Activated CD8-positive, alpha-beta T cell treated with anti-CD3 and anti-CD28 coated beads for 36 hours (primary cell): ENCODE measurements at regions of chr1 and their contacts with region 1.

Region 1: GRCh38 chr1:50873458-50874187 is 86.4 kb downstream of the FAF1 start:
- DNase-seq: peak; percentile 87
- ATAC-seq: peak; percentile 82
- H3K4me3 Mint-ChIP-seq: no peak overlapping the region
- H3K27ac Mint-ChIP-seq: no peak overlapping the region
- H3K4me1 Mint-ChIP-seq: peaks cover 12% of the 10 kb centered on the region
- H3K27me3 Mint-ChIP-seq: no peaks in the 10 kb centered on the region
- CTCF ChIP-seq: peak; percentile 77

Region 2: GRCh38 chr1:50861772-50862171 is 11.9 kb before region 1 on chr1:
- CTCF ChIA-PET with region 1: interaction called, 11 read pairs
- POLR2A ChIA-PET with region 1: no interaction called
- intact Hi-C with region 1: no loop called
- DNase-seq: no peak
- ATAC-seq: no peak
- H3K4me3 Mint-ChIP-seq: no peak overlapping the region
- H3K27ac Mint-ChIP-seq: no peak overlapping the region
- H3K4me1 Mint-ChIP-seq: peaks cover 18% of the 10 kb centered on the region
- H3K27me3 Mint-ChIP-seq: no peaks in the 10 kb centered on the region
- CTCF ChIP-seq: no peak

Region 3: GRCh38 chr1:50959913-50960844 is 86.6 kb after region 1 on chr1 and contains the start of gene FAF1:
- CTCF ChIA-PET with region 1: interaction called, 10 read pairs
- POLR2A ChIA-PET with region 1: no interaction called
- intact Hi-C with region 1: no loop called
- DNase-seq: peak; percentile 96
- ATAC-seq: peak; percentile 89
- H3K4me3 Mint-ChIP-seq: peak within 1 kb of the TSS; percentile 88
- H3K27ac Mint-ChIP-seq: peak within 1 kb of the TSS; percentile 91
- H3K4me1 Mint-ChIP-seq: peaks cover 21% of the 10 kb centered on the region
- H3K27me3 Mint-ChIP-seq: no peaks in the 10 kb centered on the region
- CTCF ChIP-seq: peak; percentile 23
- total RNA-seq, gene FAF1: 82.2 to 87.0 TPM

Region 4: DNA sequence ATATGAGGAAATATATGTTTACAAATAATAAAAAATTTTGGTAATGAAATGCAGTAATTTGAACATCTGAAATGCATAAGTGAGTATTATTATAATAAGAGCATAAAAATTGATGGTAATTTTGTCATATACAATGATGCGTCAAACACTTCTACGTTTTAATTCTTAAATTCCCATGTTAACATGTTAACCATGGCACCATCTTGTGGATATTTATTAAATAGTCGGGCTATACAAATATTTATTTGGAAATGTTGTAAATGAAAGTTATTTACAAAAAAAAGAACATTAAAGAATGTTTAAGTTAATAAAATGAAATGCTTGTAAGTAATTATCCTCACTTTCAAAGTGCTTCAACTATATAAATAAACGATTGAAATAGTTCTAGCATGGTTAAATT is 171.2 kb after region 1 on chr1:
- CTCF ChIA-PET with region 1: no interaction called
- POLR2A ChIA-PET with region 1: no interaction called
- intact Hi-C with region 1: loop called (anchors 10 kb)
- DNase-seq: no peak
- ATAC-seq: no peak
- H3K4me3 Mint-ChIP-seq: no peak overlapping the region
- H3K27ac Mint-ChIP-seq: no peak overlapping the region
- H3K4me1 Mint-ChIP-seq: no peaks in the 10 kb centered on the region
- H3K27me3 Mint-ChIP-seq: peaks cover 9% of the 10 kb centered on the region
- CTCF ChIP-seq: peak; percentile 37